ENCODE measurements at regions of chr9 and their contacts with region 1.

Region 1: DNA sequence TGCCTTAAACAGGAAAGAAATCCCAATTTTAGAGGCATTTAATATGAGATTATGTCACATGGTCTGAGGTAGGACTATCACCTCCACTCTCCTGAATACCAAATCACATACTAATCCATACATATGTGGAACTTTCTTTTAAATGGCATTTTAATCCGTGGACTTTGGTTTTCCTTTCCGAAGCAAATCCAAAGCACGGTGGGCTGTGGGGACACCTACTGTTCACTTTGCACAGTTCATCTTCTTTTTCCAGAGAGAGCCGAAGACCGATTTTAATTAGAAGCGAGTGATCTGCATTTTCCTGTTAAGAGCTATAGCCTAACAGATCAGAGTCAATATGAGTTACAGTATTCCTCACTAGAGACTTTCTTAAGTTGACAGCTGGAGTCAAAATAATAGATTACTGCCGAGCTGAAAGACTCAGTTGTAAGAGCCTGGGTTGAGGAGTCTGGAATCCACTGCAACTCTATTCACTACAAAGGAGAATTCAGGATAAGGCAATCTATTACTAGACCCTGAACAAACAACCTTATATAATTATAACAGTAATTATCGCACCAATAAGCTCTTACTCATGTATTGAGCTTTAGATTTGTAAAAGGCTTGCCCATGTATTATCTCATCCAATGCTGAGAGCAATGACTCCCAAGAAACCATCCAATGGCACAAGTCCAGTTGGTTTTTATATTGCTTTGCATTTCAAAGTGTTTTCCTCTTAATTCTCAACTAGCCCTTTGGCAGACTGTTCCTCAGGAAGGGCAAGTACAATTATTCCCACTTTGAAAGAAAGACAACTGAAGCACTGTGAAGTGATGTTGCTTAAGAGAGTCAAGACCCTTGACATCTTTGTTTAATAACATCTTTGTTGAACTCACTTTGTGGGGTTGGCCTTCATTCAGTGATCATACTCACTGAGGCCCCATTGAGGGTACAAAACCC is 144.7 kb downstream of the TRPM6 start:
- DNase-seq: peak; percentile 31
- H3K4me3 Mint-ChIP-seq: no peak overlapping the region
- H3K27ac Mint-ChIP-seq: no peak overlapping the region
- H3K4me1 Mint-ChIP-seq: peaks cover 3% of the 10 kb centered on the region
- H3K27me3 Mint-ChIP-seq: peaks cover 34% of the 10 kb centered on the region

Region 2: GRCh38 chr9:74496819-74497747 is 246.0 kb before region 1 on chr9 and contains the start of gene RORB:
- CTCF ChIA-PET with region 1: no interaction called
- intact Hi-C with region 1: loop called (anchors 10 kb)
- DNase-seq: peak; percentile 28
- H3K4me3 Mint-ChIP-seq: peak within 1 kb of the TSS; percentile 82
- H3K27ac Mint-ChIP-seq: no peak within 1 kb of the TSS
- H3K4me1 Mint-ChIP-seq: peaks cover 28% of the 10 kb centered on the region
- H3K27me3 Mint-ChIP-seq: peaks cover 50% of the 10 kb centered on the region
- total RNA-seq, gene RORB: 0.02 TPM in 1 of 2 experiments, not detected in the other

Region 3: DNA sequence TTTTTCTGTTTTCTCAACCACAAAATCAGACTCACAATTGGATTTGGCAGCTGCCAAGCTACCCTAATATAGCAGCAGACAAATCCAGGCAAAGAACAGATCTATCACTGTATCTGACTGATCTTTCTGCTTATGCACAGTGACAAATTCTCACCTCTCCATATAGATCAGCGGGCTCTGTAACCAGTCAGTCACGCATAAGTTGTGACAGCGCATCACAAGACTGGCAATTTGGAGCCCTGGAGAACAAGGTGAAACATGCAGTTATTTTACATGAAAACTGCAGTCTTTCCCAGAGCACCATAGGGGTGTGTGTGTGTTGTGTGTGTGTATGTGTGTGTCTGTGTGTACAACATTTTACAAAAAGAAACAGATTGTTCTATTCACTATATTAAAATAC is 208.2 kb before region 1 on chr9:
- CTCF ChIA-PET with region 1: no interaction called
- intact Hi-C with region 1: no loop called
- DNase-seq: no peak
- H3K4me3 Mint-ChIP-seq: no peak overlapping the region
- H3K27ac Mint-ChIP-seq: no peak overlapping the region
- H3K4me1 Mint-ChIP-seq: no peaks in the 10 kb centered on the region
- H3K27me3 Mint-ChIP-seq: no peaks in the 10 kb centered on the region

Region 4: GRCh38 chr9:74577956-74578355 is 165.1 kb before region 1 on chr9:
- CTCF ChIA-PET with region 1: no interaction called
- intact Hi-C with region 1: loop called (anchors 2 kb)
- DNase-seq: no peak
- H3K4me3 Mint-ChIP-seq: no peak overlapping the region
- H3K27ac Mint-ChIP-seq: no peak overlapping the region
- H3K4me1 Mint-ChIP-seq: no peaks in the 10 kb centered on the region
- H3K27me3 Mint-ChIP-seq: no peaks in the 10 kb centered on the region

Region 5: DNA sequence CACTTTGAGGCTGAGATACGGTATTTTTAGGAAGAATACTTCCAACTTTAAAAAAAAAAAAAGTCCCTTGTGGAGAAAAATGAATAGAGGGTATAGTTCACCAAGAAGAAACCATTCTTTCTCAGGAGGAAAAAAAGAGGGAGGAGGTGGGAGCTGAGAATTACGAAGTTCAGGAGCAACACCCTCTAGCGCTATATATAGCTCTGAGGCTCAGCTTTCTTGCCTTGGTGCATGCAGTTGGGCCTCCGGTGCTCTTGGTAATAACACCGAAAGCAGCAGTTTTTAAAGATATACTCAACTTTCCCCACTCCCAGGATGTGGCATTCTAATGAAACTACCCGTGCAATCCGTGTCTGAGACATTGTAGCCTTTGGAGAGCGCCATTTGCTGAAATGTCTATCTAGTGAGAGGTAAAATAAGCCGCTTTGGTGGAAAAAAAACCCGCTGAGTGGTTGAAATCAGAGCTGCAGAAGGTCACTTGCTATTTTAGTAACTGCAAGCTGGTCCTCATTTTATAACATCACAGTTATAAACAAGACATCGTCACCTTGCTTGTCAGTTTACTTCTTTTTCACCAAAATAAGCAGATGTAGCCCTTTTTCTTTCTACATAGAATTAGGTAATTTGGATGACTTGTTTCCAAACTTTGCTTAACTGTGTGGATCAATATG is 89.5 kb before region 1 on chr9:
- CTCF ChIA-PET with region 1: no interaction called
- intact Hi-C with region 1: loop called (anchors 5 kb)
- DNase-seq: no peak
- H3K4me3 Mint-ChIP-seq: no peak overlapping the region
- H3K27ac Mint-ChIP-seq: no peak overlapping the region
- H3K4me1 Mint-ChIP-seq: no peaks in the 10 kb centered on the region
- H3K27me3 Mint-ChIP-seq: peaks cover 7% of the 10 kb centered on the region

Region 6: GRCh38 chr9:74973714-74974113 is 230.7 kb after region 1 on chr9:
- CTCF ChIA-PET with region 1: no interaction called
- intact Hi-C with region 1: no loop called
- DNase-seq: no peak
- H3K4me3 Mint-ChIP-seq: no peak overlapping the region
- H3K27ac Mint-ChIP-seq: no peak overlapping the region
- H3K4me1 Mint-ChIP-seq: peaks cover 10% of the 10 kb centered on the region
- H3K27me3 Mint-ChIP-seq: no peaks in the 10 kb centered on the region